ENCODE measurements at regions of chr3 and their contacts with region 1.

Region 1: GRCh38 chr3:107531917-107532469 is 9.2 kb downstream of the BBX start:
- DNase-seq: no peak
- ATAC-seq: no peak
- H3K4me3 ChIP-seq: no peak overlapping the region
- H3K27ac ChIP-seq: no peak overlapping the region
- H3K4me1 ChIP-seq: peaks cover 0 to 6% (median 0%) of the 10 kb centered on the region in 9 donors
- H3K27me3 ChIP-seq: no peaks in the 10 kb centered on the region
- CTCF ChIP-seq: no peak

Region 2: GRCh38 chr3:107345822-107346405 is 186.1 kb before region 1 on chr3:
- intact Hi-C with region 1: no loop called
- DNase-seq: no peak
- ATAC-seq: no peak
- H3K4me3 ChIP-seq: no peak overlapping the region
- H3K27ac ChIP-seq: no peak overlapping the region
- H3K4me1 ChIP-seq: no peaks in the 10 kb centered on the region
- H3K27me3 ChIP-seq: no peaks in the 10 kb centered on the region
- CTCF ChIP-seq: no peak

Region 3: DNA sequence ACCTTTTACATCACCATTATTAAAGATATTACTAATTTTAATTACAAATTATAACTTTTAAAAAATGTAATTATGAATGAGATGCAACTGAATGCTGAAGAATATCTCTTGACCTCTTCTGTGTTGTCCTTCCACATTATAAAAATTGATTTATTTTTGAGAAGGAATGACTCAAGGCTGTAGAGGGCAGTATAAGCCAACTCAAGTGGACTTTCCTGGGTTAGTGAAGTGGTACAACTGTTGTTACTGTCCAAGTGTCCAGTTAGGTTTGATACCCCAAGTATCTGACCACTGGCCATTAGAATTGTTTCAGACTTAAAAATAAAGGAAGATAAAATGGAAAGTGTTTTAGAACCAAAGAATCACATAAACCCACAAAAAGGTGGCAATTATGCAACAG is 42.7 kb after region 1 on chr3:
- intact Hi-C with region 1: no loop called
- DNase-seq: peak in 1 of 2 donors; percentile 32
- ATAC-seq: peak in 6 of 8 donors; percentile 51 to 79 (median 70)
- H3K4me3 ChIP-seq: no peak overlapping the region
- H3K27ac ChIP-seq: no peak overlapping the region
- H3K4me1 ChIP-seq: peaks cover 0 to 14% (median 4%) of the 10 kb centered on the region in 9 donors
- H3K27me3 ChIP-seq: no peaks in the 10 kb centered on the region
- CTCF ChIP-seq: peak; percentile 37 to 77 (median 66)

Region 4: GRCh38 chr3:107598926-107599771 is 67.2 kb after region 1 on chr3:
- intact Hi-C with region 1: loop called in 1 of 10 experiments (anchors 10 kb)
- DNase-seq: peak; percentile 23 to 56
- ATAC-seq: peak; percentile 87 to 94 (median 92)
- H3K4me3 ChIP-seq: peak overlapping the region; percentile 1 to 53 (median 44)
- H3K27ac ChIP-seq: peak overlapping the region; percentile 52 to 88 (median 82)
- H3K4me1 ChIP-seq: peaks cover 0 to 35% (median 26%) of the 10 kb centered on the region in 9 donors
- H3K27me3 ChIP-seq: no peaks in the 10 kb centered on the region
- CTCF ChIP-seq: no peak

Region 5: DNA sequence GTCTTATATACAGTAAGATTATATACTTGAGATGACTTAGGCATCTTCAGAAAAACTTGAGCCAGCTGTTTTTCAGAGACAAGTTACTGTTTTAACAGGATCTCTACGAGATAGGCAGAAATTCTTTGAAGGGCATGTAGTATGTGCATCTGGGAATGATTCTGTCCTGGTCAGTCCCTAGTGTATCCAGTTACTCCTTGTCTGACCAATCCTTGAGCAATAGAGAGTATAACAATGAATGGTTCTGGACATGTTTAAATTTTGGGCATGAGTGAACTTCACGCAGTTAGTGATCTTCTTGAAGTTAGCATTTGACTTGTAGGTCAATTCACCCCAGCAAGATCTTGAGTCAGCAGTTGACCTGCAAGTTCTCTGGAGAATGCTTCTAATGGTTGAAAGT is 739.6 kb after region 1 on chr3:
- intact Hi-C with region 1: no loop called
- DNase-seq: no peak
- ATAC-seq: no peak
- H3K4me3 ChIP-seq: no peak overlapping the region
- H3K27ac ChIP-seq: no peak overlapping the region
- H3K4me1 ChIP-seq: no peaks in the 10 kb centered on the region
- H3K27me3 ChIP-seq: no peaks in the 10 kb centered on the region
- CTCF ChIP-seq: no peak